Colonic mucosa (tissue), 4 donors: ENCODE measurements at regions of chrX and their contacts with region 1.

Region 1: DNA sequence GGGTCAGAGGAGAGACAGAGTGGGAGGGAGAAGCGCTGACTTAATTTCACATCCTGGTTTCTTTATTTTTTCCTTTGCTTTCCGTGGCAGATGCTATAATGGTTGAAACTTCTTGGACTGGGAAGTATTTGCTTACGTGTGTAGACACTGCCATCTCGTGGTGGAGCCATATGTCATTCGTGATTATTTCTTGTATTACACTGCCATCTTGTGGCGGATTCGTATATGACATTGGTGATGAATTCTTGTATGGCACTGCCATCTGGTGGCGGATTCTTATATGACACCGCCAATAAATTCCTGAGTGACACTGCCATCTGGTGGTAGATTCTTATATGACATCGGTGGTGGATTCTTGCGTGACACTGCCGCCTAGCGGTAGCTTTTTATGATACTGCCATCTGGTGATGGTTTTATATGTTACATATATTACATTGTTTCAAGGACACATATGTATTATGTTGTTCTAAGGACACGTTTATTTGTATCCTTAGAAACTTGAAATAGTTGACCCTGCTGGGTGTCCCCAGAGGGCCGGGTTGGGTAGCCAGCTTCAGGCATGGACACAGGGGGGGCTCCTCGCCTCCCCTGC is 37.3 kb upstream of the CLCN4 start:
- DNase-seq: peak; percentile 85
- H3K4me3 ChIP-seq: no peak overlapping the region
- H3K27ac ChIP-seq: no peak overlapping the region
- H3K4me1 ChIP-seq: no peaks in the 10 kb centered on the region
- H3K27me3 ChIP-seq: no peaks in the 10 kb centered on the region
- CTCF ChIP-seq: peak; percentile 100

Region 2: GRCh38 chrX:9758021-9758638 is 361.4 kb before region 1 on chrX:
- intact Hi-C with region 1: no loop called
- DNase-seq: no peak
- H3K4me3 ChIP-seq: no peak overlapping the region
- H3K27ac ChIP-seq: no peak overlapping the region
- H3K4me1 ChIP-seq: no peaks in the 10 kb centered on the region
- H3K27me3 ChIP-seq: no peaks in the 10 kb centered on the region
- CTCF ChIP-seq: no peak

Region 3: GRCh38 chrX:9873952-9874351 is 245.5 kb before region 1 on chrX:
- intact Hi-C with region 1: loop called (anchors 2 kb)
- DNase-seq: peak; percentile 31
- H3K4me3 ChIP-seq: no peak overlapping the region
- H3K27ac ChIP-seq: no peak overlapping the region
- H3K4me1 ChIP-seq: no peaks in the 10 kb centered on the region
- H3K27me3 ChIP-seq: no peaks in the 10 kb centered on the region
- CTCF ChIP-seq: peak; percentile 53

Region 4: DNA sequence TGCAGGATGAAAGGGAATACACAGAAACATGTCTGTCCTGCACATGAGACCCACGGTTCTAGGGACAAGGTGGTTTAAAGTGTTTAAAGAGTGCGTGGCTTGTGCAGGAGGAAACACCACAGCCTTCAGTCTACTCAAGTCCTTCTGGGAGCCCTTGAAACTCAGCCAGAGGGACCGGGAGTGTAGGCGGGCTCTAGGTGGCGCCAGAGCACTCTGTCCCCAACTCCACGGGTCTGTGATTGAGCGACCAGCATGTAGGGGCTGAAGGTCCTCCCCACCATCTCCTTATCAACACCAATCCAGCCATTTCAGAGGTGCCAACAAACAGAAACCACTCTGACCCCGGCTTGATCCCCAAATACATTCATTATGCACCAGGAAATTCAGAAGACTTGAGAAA is 234.3 kb before region 1 on chrX:
- intact Hi-C with region 1: loop called (anchors 5 kb)
- DNase-seq: peak; percentile 57
- H3K4me3 ChIP-seq: no peak overlapping the region
- H3K27ac ChIP-seq: no peak overlapping the region
- H3K4me1 ChIP-seq: no peaks in the 10 kb centered on the region
- H3K27me3 ChIP-seq: no peaks in the 10 kb centered on the region
- CTCF ChIP-seq: peak; percentile 42

Region 5: GRCh38 chrX:9995855-9996339 is 123.6 kb before region 1 on chrX:
- intact Hi-C with region 1: loop called (anchors 1 kb)
- DNase-seq: peak; percentile 87
- H3K4me3 ChIP-seq: no peak overlapping the region
- H3K27ac ChIP-seq: no peak overlapping the region
- H3K4me1 ChIP-seq: no peaks in the 10 kb centered on the region
- H3K27me3 ChIP-seq: no peaks in the 10 kb centered on the region
- CTCF ChIP-seq: peak; percentile 98

Region 6: DNA sequence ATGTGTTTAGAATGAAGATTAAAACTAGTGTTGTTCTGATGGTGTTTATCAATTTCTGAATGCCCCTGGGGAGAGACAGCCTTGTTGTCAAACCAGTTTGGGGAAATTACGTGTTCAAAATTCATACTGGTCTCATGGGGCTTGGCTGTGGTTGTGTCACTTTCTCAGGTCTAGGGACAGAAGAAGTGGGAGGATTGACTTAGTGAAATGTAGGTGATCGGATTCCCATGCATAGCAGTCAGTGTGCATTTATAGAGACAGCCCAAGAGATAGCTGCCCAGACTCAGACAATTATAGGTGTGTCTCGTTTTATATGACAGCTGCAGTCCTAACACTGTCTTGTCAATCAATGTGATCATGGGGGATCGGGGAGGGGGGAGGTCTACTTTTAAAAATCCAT is 57.1 kb before region 1 on chrX:
- intact Hi-C with region 1: no loop called
- DNase-seq: no peak
- H3K4me3 ChIP-seq: no peak overlapping the region
- H3K27ac ChIP-seq: no peak overlapping the region
- H3K4me1 ChIP-seq: no peaks in the 10 kb centered on the region
- H3K27me3 ChIP-seq: no peaks in the 10 kb centered on the region
- CTCF ChIP-seq: no peak